ENCODE measurements at regions of chr3 and their contacts with region 1.

Region 1: DNA sequence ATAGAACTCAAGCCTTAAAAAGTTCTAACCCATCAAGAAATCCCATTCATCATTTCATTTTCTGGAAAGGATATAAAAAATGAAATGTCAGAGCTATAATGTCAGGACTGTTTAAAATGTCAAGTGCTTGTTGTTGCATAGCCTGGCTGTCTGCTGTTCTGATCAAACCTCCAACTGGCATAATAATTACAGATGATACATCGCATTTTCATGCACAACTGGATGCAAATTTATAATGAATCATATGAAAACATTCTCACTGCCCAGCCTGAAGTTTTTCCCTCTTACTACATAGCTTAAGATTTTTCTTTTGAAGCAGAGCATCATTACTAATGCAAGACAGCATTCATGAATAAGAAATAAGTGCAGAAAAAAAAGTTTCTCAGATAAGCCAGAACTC is 46.5 kb downstream of the GUCA1C start:
- DNase-seq: no peak
- ATAC-seq: peak in 1 of 2 donors; percentile 72

Region 2: DNA sequence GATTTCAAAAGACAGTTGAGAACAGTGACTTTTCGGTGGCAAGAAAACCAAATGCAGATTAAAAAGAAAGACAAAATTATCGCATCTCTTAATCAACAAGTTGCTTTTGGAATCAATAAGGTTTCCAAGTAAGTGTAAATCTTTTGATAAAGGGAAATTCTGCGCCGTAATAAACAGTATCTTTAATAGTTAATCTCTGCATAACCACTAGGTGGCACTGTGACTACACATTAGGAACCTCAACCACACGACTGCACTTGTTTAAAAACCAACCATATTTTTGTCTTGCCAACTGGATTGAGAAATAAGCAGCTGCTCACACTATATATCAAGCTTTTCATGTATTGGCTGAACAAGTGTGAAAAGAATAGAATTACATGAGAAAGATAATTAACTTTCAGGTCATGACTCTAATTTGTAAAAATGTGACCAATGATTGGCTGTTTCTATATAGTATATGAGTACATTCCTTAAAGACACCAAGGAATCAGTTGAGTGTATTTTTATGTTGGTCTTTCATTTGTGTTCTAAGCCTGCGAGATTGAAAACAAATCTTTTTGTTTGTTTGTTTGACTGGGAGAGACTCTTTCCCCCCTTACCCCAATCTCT is 245.0 kb before region 1 on chr3:
- intact Hi-C with region 1: loop called (anchors 5 to 10 kb)
- DNase-seq: no peak
- ATAC-seq: peak; percentile 67 to 70